Common myeloid progenitor, CD34-positive (primary cell): ENCODE measurements at regions of chr21 and their contacts with region 1.

Region 1: DNA sequence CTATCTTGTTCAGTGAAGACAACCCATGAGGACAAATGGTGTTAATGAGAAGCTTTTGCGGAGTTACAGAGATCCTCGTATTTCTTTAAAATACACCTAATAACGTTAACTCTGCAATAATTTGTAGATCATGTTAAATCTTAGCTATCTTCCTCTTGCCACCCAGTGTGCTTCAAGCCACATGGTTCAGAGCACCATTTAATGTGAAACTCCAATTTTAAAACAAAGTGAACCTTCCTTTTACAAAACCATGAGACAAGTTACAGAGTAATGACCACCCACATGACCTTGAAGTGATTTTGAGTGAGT is 1.7 kb upstream of the KCNE2 start:
- DNase-seq: no peak
- H3K4me3 ChIP-seq: peak overlapping the region in 1 of 7 experiments; percentile 14
- H3K27ac ChIP-seq: no peak overlapping the region
- H3K4me1 ChIP-seq: peaks cover 0 to 2% (median 0%) of the 10 kb centered on the region in 4 experiments
- H3K27me3 ChIP-seq: no peaks in the 10 kb centered on the region

Region 2: GRCh38 chr21:34157521-34157920 is 204.6 kb before region 1 on chr21:
- CTCF ChIA-PET with region 1: no interaction called
- POLR2A ChIA-PET with region 1: no interaction called
- DNase-seq: no peak
- H3K4me3 ChIP-seq: no peak overlapping the region
- H3K27ac ChIP-seq: no peak overlapping the region
- H3K4me1 ChIP-seq: no peaks in the 10 kb centered on the region
- H3K27me3 ChIP-seq: no peaks in the 10 kb centered on the region

Region 3: DNA sequence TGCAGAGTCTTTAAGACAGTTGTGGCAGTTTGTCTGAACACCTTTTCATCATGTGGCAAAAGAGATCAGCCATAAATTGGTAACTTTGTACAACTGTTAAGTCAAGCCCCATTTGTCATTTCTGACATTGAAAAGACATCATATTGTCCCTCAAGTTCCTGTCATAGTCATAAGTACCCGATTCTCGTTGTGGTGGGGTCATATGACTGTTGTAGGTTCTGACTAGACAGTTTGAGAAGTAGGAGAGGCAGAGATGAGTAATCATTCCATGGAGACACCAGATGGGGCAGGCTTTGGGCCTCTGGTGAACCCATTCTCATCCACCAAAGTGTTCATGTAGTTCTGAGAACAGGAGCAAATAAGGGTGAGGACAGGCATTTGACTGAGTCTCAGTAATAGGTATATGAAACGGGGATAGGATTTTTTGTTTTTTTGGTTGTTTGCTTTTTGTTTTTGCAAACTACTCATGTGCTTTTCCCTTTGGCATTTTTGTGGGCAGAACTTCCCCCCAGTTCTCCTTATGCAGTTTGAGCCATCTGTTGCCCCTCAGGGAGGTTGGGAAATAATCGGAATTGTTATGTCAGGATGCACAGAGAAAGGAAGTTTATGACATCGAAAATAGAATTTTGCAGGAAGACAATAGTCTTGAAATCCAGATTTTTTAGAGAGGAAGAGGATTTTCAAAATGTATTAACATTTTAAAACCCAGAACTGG is 85.2 kb before region 1 on chr21:
- CTCF ChIA-PET with region 1: no interaction called
- POLR2A ChIA-PET with region 1: no interaction called
- DNase-seq: peak in 1 of 3 donors; percentile 3
- H3K4me3 ChIP-seq: no peak overlapping the region
- H3K27ac ChIP-seq: no peak overlapping the region
- H3K4me1 ChIP-seq: no peaks in the 10 kb centered on the region
- H3K27me3 ChIP-seq: peaks cover 0 to 4% (median 1%) of the 10 kb centered on the region in 5 experiments

Region 4: DNA sequence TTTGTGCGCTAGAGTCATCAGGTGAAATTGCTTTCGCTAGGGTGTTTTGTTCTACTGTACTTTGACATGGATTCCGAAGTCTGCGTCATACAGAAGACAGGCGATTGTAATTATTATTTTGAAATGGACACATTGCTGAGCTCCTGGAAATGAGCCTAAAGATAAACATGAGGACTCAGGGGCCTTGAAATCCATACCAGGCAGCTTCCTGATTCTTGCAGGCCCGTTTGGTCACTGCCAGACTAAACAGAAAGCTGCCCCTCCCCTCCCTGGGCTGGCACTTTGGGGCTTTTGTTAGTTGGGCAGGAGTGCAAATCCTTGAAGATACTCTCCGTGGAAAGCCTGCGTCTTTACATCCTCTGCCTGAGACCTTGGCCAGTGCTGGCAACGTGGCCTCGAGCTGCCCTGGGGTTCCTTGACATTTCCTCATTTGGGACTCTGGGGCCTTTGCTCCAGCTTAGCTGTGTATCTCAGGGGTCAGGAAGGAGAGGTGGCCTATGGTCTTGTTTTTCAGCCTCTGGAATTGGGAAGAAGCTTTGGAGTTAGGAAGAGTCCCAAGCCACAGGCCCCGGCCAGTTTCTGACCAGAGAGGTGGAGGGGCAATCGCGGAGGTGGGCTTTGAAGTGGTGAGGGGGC is 25.2 kb before region 1 on chr21:
- CTCF ChIA-PET with region 1: no interaction called
- POLR2A ChIA-PET with region 1: no interaction called
- DNase-seq: no peak
- H3K4me3 ChIP-seq: no peak overlapping the region
- H3K27ac ChIP-seq: no peak overlapping the region
- H3K4me1 ChIP-seq: peaks cover 0 to 13% (median 0%) of the 10 kb centered on the region in 4 experiments
- H3K27me3 ChIP-seq: no peaks in the 10 kb centered on the region

Region 5: DNA sequence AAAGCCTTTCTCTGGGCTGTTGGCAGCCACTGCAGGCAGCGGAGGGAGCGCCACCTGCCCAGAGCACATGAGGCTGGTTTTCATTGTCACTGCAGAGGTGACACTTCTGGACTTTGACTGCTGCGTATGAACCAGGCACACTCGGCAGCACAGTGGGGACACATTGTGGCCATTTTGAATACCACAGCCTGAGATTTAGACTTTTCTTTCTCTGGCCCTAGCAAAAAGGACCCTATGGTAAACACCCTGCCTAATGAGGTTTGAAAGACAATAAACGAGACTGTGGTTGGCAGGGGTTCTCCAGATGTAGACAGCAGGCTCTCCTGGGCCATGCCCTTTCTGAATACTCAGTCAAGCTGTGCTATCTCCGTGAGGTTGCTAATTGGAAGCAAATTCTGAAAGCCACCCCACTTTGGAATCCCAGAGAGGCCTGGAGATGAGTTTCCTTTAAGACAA is 10.3 kb before region 1 on chr21:
- CTCF ChIA-PET with region 1: interaction called, 15 read pairs
- POLR2A ChIA-PET with region 1: no interaction called
- DNase-seq: peak; percentile 56 to 77 (median 71)
- H3K4me3 ChIP-seq: no peak overlapping the region
- H3K27ac ChIP-seq: no peak overlapping the region
- H3K4me1 ChIP-seq: no peaks in the 10 kb centered on the region
- H3K27me3 ChIP-seq: no peaks in the 10 kb centered on the region